Ovary (tissue), 10 donors: ENCODE measurements at regions of chr16 and their contacts with region 1.

Region 1: DNA sequence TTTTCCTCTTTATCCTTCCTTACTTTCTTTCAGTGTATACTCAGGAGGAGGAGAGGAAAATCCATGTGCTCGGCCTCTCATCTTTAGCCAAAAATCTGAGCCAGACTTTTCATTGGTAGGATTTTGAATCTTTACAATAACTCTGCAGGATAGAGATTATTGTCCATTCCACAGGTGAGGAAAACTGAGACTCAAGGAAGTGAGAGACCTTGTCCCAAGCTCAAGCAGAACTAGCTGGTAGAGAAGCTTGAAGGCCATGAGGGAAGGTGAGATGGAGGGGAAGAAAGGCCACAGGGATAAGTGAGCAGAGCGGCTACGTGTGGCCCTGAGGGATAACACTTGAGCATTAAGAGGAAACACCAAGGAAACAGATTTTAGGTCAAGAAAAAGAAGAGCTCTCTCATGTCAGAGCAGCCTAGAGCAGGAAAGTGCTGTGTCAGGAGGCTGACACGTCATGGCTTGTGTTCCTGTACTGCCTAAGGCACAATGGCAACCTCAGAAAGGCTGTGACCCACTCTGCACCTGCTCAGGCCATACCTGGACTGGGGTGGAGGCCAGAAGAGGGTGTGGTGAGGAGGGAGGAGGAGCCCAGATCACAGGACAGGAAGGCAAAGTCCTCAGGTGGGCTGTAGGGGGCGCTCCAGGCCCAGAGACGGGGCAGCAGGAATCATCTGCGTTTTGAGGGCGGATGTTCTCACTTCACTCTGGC is 11.9 kb downstream of the MT4 start:
- DNase-seq: peak; percentile 44 to 78 (median 62)
- H3K4me3 ChIP-seq: no peak overlapping the region
- H3K27ac ChIP-seq: no peak overlapping the region
- H3K4me1 ChIP-seq: no peaks in the 10 kb centered on the region
- H3K27me3 ChIP-seq: no peaks in the 10 kb centered on the region
- CTCF ChIP-seq: peak in 2 of 3 donors; percentile 39 to 64
- EP300 ChIP-seq: no peak
- POLR2A ChIP-seq: no peak

Region 2: DNA sequence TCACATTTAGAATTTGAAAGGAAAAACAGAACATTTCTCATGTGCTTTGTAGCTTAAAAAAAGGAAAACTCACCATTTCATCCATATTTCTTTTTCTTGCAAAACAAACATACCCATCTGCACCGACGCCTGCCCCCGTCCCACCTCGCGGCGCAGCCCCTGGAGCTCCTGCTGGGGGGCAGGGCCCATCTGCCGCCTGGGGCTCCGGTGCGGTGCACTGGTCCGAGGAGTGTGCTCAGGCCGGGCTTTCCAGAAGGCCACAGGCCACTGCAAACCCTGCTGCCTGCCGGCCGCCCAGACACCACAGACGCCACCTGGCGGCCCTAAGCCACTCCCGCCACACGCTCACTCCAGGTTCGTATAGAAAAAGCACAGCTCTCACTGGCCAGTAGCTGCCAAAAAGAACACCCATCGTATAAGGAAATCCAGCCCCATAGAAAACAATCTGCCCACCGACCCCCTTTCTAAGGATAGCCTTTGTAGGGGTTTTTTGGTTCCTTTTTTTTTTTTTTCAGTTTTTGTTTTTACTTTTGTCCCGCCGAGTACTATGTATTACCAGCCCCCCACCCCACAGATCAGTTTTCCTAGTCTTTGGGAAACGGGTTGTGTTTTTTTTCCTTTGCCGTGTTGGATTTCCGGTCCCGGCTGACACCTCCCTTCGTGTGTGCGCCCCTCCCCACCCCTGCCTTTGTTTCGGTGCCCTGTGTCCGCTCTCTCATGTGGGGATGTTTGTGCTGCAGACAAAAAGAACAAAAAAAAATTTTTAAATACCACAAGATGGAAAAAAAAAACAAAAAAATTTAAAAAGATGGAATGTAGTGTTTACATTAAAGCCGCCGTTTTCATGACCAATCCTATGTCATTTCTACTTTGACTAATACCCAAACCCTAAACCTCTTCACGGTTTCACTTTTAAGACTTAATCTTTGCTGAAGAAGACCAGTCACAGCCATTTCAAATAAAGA is 220.2 kb before region 1 on chr16:
- intact Hi-C with region 1: no loop called
- DNase-seq: peak; percentile 72 to 85 (median 77)
- H3K4me3 ChIP-seq: peak overlapping the region; percentile 42
- H3K27ac ChIP-seq: peak overlapping the region in 1 of 2 donors; percentile 63
- H3K4me1 ChIP-seq: no peaks in the 10 kb centered on the region
- H3K27me3 ChIP-seq: no peaks in the 10 kb centered on the region
- CTCF ChIP-seq: peak; percentile 69 to 79 (median 72)
- EP300 ChIP-seq: no peak
- POLR2A ChIP-seq: no peak

Region 3: GRCh38 chr16:56382901-56383355 is 193.8 kb before region 1 on chr16:
- intact Hi-C with region 1: no loop called
- DNase-seq: no peak
- H3K4me3 ChIP-seq: no peak overlapping the region
- H3K27ac ChIP-seq: no peak overlapping the region
- H3K4me1 ChIP-seq: no peaks in the 10 kb centered on the region
- H3K27me3 ChIP-seq: no peaks in the 10 kb centered on the region
- CTCF ChIP-seq: no peak
- EP300 ChIP-seq: no peak
- POLR2A ChIP-seq: no peak

Region 4: DNA sequence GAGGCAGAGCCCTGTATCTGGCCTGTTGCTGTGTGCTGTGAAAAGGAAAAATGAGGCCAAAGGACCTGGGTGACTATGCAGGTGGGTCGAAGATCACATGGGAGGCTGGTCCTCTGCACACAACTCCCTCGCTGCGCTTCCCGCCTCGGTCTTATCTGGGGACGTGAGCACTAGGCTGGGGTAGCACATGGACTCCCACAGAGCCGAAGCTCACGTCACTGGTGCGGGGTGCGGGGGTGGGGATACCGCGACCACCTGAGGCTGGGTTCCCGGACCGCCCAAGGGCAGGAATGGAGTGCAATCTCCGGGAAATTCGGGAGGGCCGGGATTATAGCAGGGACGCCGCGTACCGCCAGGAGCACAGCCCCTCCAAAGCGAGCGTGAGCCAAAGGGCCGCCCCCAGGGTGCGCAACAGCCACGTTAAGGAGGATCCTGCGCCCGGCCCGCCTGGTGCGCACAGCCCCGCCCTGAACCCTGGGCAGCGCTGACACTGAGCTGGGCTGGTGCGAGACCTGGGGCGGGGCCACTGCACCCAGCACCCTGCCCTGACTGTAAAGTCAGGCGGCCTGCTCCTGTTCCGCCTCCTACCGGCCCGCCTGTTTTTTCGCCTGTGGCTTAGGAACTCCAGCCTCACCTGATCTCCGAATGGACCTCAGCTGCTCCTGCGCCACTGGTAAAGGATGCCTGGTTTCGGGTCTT is 66.5 kb after region 1 on chr16:
- intact Hi-C with region 1: no loop called
- DNase-seq: peak in 3 of 5 donors; percentile 51 to 73 (median 57)
- H3K4me3 ChIP-seq: peak overlapping the region; percentile 2
- H3K27ac ChIP-seq: no peak overlapping the region
- H3K4me1 ChIP-seq: peaks cover 6% of the 10 kb centered on the region
- H3K27me3 ChIP-seq: no peaks in the 10 kb centered on the region
- CTCF ChIP-seq: peak in 2 of 3 donors; percentile 23 to 26
- EP300 ChIP-seq: peak; percentile 82
- POLR2A ChIP-seq: no peak

Region 5: DNA sequence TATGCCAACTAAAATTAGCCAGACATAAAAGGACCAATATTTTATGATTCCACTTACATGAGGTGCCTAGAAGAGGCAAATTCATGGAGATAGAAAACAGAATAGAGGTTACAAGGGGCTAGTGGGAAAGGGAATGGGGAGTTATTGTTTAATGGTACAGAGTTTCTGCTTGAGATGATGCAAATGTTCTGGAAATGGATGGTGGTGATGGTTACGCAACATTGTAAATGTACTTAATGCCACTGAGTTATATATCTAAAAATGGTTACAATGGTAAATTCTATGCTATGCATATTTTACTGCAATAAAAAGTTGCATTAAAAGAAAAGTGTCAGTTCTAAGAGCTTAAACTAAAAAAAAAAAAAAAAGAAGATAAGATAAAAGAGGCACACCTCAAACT is 123.5 kb after region 1 on chr16:
- intact Hi-C with region 1: loop called in 1 of 4 experiments (anchors 5 kb)
- DNase-seq: no peak
- H3K4me3 ChIP-seq: no peak overlapping the region
- H3K27ac ChIP-seq: no peak overlapping the region
- H3K4me1 ChIP-seq: no peaks in the 10 kb centered on the region
- H3K27me3 ChIP-seq: no peaks in the 10 kb centered on the region
- CTCF ChIP-seq: no peak
- EP300 ChIP-seq: no peak
- POLR2A ChIP-seq: no peak

Region 6: GRCh38 chr16:56789360-56789759 is 212.6 kb after region 1 on chr16:
- intact Hi-C with region 1: no loop called
- DNase-seq: peak in 4 of 5 donors; percentile 22 to 48 (median 44)
- H3K4me3 ChIP-seq: no peak overlapping the region
- H3K27ac ChIP-seq: no peak overlapping the region
- H3K4me1 ChIP-seq: peaks cover 5% of the 10 kb centered on the region
- H3K27me3 ChIP-seq: no peaks in the 10 kb centered on the region
- CTCF ChIP-seq: no peak
- EP300 ChIP-seq: no peak
- POLR2A ChIP-seq: no peak